Astrocyte of the cerebellum (primary cell): ENCODE measurements at regions of chr1 and their contacts with region 1.

Region 1: GRCh38 chr1:37612200-37612599 is 16.5 kb upstream of the GNL2 start:
- DNase-seq: no peak
- H3K4me3 ChIP-seq: no peak overlapping the region
- CTCF ChIP-seq: no peak

Region 2: GRCh38 chr1:37661401-37661800 is 49.2 kb after region 1 on chr1:
- in situ Hi-C with region 1: loop called (anchors 5 kb)
- DNase-seq: no peak
- H3K4me3 ChIP-seq: no peak overlapping the region
- CTCF ChIP-seq: no peak

Region 3: DNA sequence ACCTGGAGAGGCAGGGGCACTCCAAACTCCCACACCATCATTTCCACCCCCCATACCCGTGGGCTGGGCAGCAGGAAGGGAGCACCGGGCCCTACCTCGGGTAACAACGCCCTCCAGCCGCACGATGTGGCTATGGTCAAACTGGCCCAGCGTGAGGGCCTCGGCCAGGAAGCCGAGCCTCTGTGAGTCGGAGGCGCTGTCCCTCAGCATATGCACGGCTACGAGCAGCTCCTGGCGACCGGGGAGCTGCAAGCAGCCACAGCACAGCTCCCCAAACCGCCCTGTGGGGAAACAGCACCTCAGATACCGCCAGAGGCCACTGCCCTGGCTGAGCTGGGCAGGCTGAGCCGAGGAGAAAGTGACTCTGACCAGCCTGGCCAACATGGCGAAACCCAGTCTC is 109.4 kb after region 1 on chr1:
- in situ Hi-C with region 1: no loop called
- DNase-seq: no peak
- H3K4me3 ChIP-seq: no peak overlapping the region
- CTCF ChIP-seq: no peak

Region 4: DNA sequence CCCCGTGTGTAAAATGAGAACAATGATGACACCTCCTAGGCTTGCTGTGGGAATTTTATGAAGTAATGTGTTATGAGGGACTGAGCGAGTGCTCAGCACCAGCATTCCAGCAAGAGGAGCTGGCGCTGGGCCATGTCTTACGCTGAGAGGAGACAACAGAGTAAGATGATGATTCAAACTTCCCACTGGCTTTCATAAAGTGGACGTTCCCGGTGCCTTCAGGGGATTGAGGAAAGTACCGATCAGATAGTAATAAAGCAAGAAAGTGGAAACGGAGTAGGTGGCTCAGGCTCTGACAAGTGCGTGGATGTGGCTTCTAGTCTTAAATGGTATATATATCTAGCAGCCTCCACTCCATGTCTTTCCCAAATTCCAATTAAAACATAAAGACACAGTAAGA is 128.9 kb after region 1 on chr1:
- in situ Hi-C with region 1: no loop called
- DNase-seq: no peak
- H3K4me3 ChIP-seq: no peak overlapping the region
- CTCF ChIP-seq: no peak

Region 5: DNA sequence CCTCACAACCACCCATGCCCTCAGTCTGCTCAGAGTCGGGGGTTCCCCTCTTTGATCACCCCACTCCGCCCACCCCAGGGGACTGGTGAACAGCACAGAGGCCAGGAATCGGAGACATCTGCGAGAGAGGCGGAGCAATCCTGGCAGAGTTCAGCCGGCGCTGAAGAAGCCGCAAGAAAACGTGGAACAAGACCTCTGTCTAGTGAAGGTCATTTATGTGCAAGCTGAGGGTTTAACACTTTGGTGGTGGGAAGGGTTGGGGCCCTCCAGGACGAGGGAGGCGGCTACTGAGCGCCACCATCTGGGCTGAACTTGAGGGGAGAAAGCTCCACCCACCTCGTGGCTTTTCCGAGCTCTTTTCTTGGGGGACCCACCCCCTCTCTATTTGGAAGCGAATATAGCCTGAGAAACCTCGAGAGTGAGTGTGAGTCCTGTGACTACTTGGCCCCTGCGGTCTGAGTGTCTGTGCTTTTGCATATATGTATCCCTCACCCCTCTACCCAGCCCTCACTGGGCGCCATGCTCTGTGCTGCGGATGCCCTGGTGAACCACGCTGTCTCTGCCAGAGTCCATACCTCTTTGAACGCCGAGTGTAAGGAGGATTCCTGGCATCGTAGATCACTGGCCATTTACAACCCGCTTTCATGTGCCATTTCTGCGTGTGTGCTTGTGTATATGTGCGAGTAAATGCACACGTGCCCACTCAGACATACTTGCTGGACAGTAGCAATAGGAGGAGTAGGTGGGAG is 153.9 kb after region 1 on chr1:
- in situ Hi-C with region 1: no loop called
- DNase-seq: no peak
- H3K4me3 ChIP-seq: no peak overlapping the region
- CTCF ChIP-seq: no peak

Region 6: GRCh38 chr1:37817481-37817880 is 205.3 kb after region 1 on chr1:
- in situ Hi-C with region 1: no loop called
- DNase-seq: no peak
- H3K4me3 ChIP-seq: no peak overlapping the region
- CTCF ChIP-seq: no peak